Head of caudate nucleus (tissue), 42 donors: ENCODE measurements at regions of chr1 and their contacts with region 1.

Region 1: GRCh38 chr1:101288491-101288944 is 51.7 kb downstream of the S1PR1 start:
- DNase-seq: peak; percentile 12 to 84 (median 67)

Region 2: GRCh38 chr1:100921109-100921706 is 367.3 kb before region 1 on chr1:
- intact Hi-C with region 1: loop called (anchors 10 kb)
- DNase-seq: peak in 1 of 42 donors; percentile 29